AG04449 (cell line): ENCODE measurements at regions of chr19 and their contacts with region 1.

Region 1: GRCh38 chr19:29761575-29762232 is 46.6 kb upstream of the C19orf12 start:
- DNase-seq: no peak
- H3K4me3 ChIP-seq: no peak overlapping the region
- CTCF ChIP-seq: no peak

Region 2: DNA sequence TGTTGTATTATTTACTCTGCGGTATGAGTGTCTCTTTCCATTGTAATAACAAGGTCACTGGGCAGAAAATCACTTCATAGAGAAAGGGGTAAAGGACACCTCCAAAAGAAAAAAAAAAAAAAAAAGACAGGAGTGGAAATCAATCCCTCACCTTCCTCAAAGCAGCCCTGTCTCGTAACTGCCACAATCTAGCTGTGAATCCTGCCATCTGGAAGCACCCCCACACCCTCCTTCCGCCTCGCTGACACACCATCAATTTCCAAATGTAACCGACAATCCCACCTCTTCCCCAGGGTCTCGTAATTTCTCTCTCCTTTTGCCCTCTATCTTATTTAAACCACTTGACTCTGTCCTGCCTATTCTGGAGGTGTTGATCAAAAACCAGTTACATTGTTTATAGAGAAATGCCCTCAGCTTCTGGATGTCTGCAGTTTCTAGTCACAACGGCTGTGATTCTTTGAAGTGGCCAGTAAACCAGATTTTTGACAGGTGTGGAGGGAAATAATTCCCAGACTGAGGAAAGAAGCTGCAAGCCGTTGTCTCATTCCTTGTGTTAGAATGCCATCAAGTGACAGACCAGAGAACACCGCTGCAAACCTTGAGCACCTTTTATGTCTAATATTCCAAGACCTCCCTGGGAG is 164.7 kb before region 1 on chr19:
- CTCF ChIA-PET with region 1: no interaction called
- POLR2A ChIA-PET with region 1: no interaction called
- DNase-seq: no peak
- H3K4me3 ChIP-seq: no peak overlapping the region
- CTCF ChIP-seq: peak; percentile 30

Region 3: DNA sequence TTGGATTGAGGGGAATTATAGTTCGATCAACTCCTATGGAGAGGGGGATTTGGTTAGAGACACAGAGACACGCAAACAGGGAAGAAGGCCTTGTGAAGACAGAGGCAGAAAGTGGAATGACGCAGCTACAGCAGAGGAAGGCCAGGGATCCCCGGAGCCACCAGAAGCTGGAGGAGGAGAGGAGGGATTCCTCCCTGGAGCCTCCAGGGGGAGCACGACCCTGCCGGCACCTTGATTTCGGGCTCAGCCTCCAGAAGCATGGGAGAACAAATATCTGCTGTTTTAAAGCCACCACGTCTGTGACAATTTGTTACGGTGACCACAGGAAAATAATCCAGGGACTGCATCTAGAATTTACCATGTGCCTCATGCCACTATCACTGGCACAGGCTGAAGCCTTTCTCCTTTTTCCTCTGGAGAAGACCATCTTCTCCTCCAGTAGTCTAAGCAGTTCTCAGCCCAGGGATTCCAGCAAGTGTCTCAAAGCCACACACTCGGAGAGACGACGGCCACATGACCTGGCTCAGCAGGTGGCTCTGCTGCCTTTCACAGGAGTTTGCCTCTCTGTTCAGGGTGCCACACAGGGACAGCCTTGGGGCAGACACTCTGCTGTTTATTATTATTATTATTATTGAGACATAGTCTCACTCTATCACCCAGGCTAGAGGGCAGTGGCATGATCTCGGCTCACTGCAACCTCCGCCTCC is 10.2 kb after region 1 on chr19:
- CTCF ChIA-PET with region 1: interaction called, 54 read pairs
- POLR2A ChIA-PET with region 1: no interaction called
- DNase-seq: peak; percentile 4
- H3K4me3 ChIP-seq: no peak overlapping the region
- CTCF ChIP-seq: peak; percentile 92

Region 4: GRCh38 chr19:29806098-29806866 is 44.6 kb after region 1 on chr19:
- CTCF ChIA-PET with region 1: no interaction called
- POLR2A ChIA-PET with region 1: no interaction called
- DNase-seq: no peak
- H3K4me3 ChIP-seq: no peak overlapping the region
- CTCF ChIP-seq: no peak

Region 5: GRCh38 chr19:29878973-29879654 is 117.4 kb after region 1 on chr19:
- CTCF ChIA-PET with region 1: interaction called, 82 read pairs
- POLR2A ChIA-PET with region 1: no interaction called
- DNase-seq: no peak
- H3K4me3 ChIP-seq: no peak overlapping the region
- CTCF ChIP-seq: no peak